Calu3 (cell line): ENCODE measurements at regions of chr5 and their contacts with region 1.

Region 1: DNA sequence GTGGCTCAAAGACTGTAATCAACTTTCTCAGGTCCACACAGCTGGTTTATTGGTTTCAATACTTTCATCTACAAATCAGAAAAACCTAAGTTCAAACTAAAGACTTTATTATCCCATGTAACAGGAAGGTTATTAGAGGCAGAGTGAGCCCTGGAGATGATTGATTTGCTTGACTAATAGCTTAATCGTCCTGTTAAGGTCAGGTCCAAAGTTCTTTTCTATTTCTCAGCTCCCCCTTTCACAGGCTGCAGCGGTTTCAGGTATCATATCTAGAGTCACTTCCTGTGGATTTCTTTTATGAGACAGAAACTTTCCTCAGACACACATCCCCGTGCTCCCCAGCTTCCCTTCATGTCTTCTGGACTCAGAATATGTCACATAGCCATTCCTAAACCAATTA is 166.4 kb downstream of the PRELID2 start:
- DNase-seq: peak; percentile 20
- H3K4me3 Mint-ChIP-seq: no peak overlapping the region
- H3K27ac Mint-ChIP-seq: no peak overlapping the region
- H3K4me1 Mint-ChIP-seq: peaks cover 26% of the 10 kb centered on the region
- H3K27me3 Mint-ChIP-seq: no peaks in the 10 kb centered on the region
- CTCF ChIP-seq: no peak

Region 2: GRCh38 chr5:145548097-145548496 is 120.6 kb before region 1 on chr5:
- CTCF ChIA-PET with region 1: no interaction called
- intact Hi-C with region 1: loop called (anchors 1 kb)
- DNase-seq: no peak
- H3K4me3 Mint-ChIP-seq: no peak overlapping the region
- H3K27ac Mint-ChIP-seq: peak overlapping the region; percentile 65
- H3K4me1 Mint-ChIP-seq: peaks cover 63% of the 10 kb centered on the region
- H3K27me3 Mint-ChIP-seq: no peaks in the 10 kb centered on the region
- CTCF ChIP-seq: no peak

Region 3: DNA sequence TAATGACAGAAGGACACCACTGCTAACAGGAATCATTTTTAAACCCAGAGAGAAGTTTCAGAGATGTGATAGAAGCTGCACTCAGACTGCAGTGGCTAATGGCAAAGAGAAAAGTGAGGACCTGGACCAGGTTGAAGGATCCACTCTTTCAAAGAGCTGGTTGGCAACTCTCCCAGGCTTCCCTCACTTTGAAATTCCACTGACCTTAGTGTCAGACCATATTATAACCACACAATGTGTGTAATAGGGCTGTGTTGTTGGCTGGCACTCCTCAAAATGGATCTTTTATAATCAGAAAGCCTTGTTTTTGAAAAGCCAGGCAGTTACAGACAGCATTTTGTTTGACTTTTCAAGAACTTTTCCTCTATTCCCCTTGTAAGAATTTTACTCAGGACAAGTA is 114.3 kb before region 1 on chr5:
- CTCF ChIA-PET with region 1: no interaction called
- intact Hi-C with region 1: loop called (anchors 2 kb)
- DNase-seq: peak; percentile 33
- H3K4me3 Mint-ChIP-seq: no peak overlapping the region
- H3K27ac Mint-ChIP-seq: no peak overlapping the region
- H3K4me1 Mint-ChIP-seq: peaks cover 33% of the 10 kb centered on the region
- H3K27me3 Mint-ChIP-seq: no peaks in the 10 kb centered on the region
- CTCF ChIP-seq: no peak

Region 4: GRCh38 chr5:145587710-145588109 is 81.0 kb before region 1 on chr5:
- CTCF ChIA-PET with region 1: no interaction called
- intact Hi-C with region 1: loop called (anchors 5 kb)
- DNase-seq: peak; percentile 50
- H3K4me3 Mint-ChIP-seq: no peak overlapping the region
- H3K27ac Mint-ChIP-seq: peak overlapping the region; percentile 92
- H3K4me1 Mint-ChIP-seq: peaks cover 41% of the 10 kb centered on the region
- H3K27me3 Mint-ChIP-seq: no peaks in the 10 kb centered on the region
- CTCF ChIP-seq: no peak